ENCODE measurements at regions of chr1 and their contacts with region 1.

Region 1: DNA sequence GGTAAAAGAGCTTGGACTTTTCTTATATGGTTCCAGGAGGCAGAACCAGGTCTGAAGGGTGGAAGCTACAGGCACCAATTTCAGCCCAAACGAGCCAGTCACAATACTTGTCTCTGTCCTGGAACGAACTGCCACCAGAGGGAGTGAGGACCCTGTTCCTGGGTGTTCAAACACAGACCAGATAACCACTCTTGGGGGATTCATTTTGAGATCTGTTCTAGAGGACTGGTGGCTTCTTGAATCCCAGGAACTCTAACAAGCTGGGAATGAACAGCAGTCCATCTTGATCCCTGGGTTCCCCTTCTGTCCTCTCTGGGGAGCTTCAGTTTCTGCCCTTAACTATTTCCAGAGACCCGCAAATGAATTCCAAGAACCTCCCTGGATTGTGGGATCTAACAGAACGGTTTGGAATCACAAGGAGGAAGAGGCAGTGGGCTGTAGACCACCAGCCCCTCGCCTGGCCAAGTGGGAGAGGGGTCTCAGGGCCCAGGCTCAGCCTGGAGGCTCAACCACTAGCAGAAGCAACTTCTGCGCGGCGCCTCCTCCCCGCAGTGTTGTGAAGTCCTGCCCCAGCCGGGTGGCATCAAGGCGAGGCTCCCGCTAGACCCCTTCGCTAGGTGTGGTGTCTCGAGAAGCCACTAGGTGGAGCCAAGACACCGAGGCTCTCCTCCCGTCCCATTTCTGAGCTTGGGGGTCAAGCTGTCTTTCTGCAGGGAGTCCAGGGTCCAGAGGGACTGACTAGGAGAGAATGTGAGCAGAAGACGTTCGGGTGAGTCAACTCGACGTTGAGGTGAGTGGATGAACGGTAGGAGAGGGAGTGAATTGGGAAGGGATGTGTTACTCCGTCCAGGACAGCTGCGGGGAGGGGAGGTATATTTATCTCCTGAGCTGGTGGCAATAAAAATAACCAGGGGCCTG is 12.1 kb upstream of the NES start:
- DNase-seq: peak; percentile 76
- H3K4me3 Mint-ChIP-seq: no peak overlapping the region
- H3K27ac Mint-ChIP-seq: no peak overlapping the region
- H3K4me1 Mint-ChIP-seq: peaks cover 31% of the 10 kb centered on the region
- H3K27me3 Mint-ChIP-seq: peaks cover 63% of the 10 kb centered on the region

Region 2: GRCh38 chr1:156591432-156592157 is 97.7 kb before region 1 on chr1 and contains the start of gene NAXE:
- CTCF ChIA-PET with region 1: no interaction called
- POLR2A ChIA-PET with region 1: no interaction called
- DNase-seq: peak; percentile 71
- H3K4me3 Mint-ChIP-seq: peak within 1 kb of the TSS; percentile 78
- H3K27ac Mint-ChIP-seq: peak within 1 kb of the TSS; percentile 83
- H3K4me1 Mint-ChIP-seq: peaks cover 28% of the 10 kb centered on the region
- H3K27me3 Mint-ChIP-seq: no peaks in the 10 kb centered on the region
- total RNA-seq, gene NAXE: 52.9 to 54.2 TPM

Region 3: GRCh38 chr1:156677616-156678596 is 11.4 kb before region 1 on chr1:
- CTCF ChIA-PET with region 1: interaction called, 41 read pairs
- POLR2A ChIA-PET with region 1: no interaction called
- DNase-seq: peak; percentile 34
- H3K4me3 Mint-ChIP-seq: no peak overlapping the region
- H3K27ac Mint-ChIP-seq: no peak overlapping the region
- H3K4me1 Mint-ChIP-seq: peaks cover 3% of the 10 kb centered on the region
- H3K27me3 Mint-ChIP-seq: peaks cover 69% of the 10 kb centered on the region

Region 4: GRCh38 chr1:156700736-156701531 is 11.6 kb after region 1 on chr1:
- CTCF ChIA-PET with region 1: interaction called, 63 read pairs
- POLR2A ChIA-PET with region 1: no interaction called
- DNase-seq: no peak
- H3K4me3 Mint-ChIP-seq: no peak overlapping the region
- H3K27ac Mint-ChIP-seq: no peak overlapping the region
- H3K4me1 Mint-ChIP-seq: peaks cover 11% of the 10 kb centered on the region
- H3K27me3 Mint-ChIP-seq: peaks cover 33% of the 10 kb centered on the region

Region 5: GRCh38 chr1:156705918-156706656 is 16.8 kb after region 1 on chr1:
- CTCF ChIA-PET with region 1: interaction called, 63 read pairs
- POLR2A ChIA-PET with region 1: no interaction called
- DNase-seq: peak; percentile 65
- H3K4me3 Mint-ChIP-seq: peak overlapping the region; percentile 71
- H3K27ac Mint-ChIP-seq: no peak overlapping the region
- H3K4me1 Mint-ChIP-seq: peaks cover 25% of the 10 kb centered on the region
- H3K27me3 Mint-ChIP-seq: peaks cover 38% of the 10 kb centered on the region

Region 6: GRCh38 chr1:156717275-156717805 is 28.0 kb after region 1 on chr1:
- CTCF ChIA-PET with region 1: interaction called, 35 read pairs
- POLR2A ChIA-PET with region 1: no interaction called
- DNase-seq: no peak
- H3K4me3 Mint-ChIP-seq: no peak overlapping the region
- H3K27ac Mint-ChIP-seq: no peak overlapping the region
- H3K4me1 Mint-ChIP-seq: peaks cover 2% of the 10 kb centered on the region
- H3K27me3 Mint-ChIP-seq: no peaks in the 10 kb centered on the region

Measured in activated CD4-positive, alpha-beta T cell treated with anti-CD3 and anti-CD28 coated beads, Interleukin-2, amount 10 ng/mL, durations not matched to agents 7 days and 5 days (primary cell).